CD8-positive, alpha-beta T cell (primary cell): ENCODE measurements at regions of chr17 and their contacts with region 1.

Region 1: GRCh38 chr17:4215882-4216570 is 47.8 kb downstream of the ANKFY1 start:
- DNase-seq: no peak
- ATAC-seq: no peak
- H3K4me3 ChIP-seq: no peak overlapping the region
- H3K4me3 Mint-ChIP-seq: no peak overlapping the region
- H3K27ac ChIP-seq: no peak overlapping the region
- H3K27ac Mint-ChIP-seq: no peak overlapping the region
- H3K4me1 ChIP-seq: no peaks in the 10 kb centered on the region
- H3K4me1 Mint-ChIP-seq: peaks cover 7% of the 10 kb centered on the region
- H3K27me3 ChIP-seq: no peaks in the 10 kb centered on the region
- H3K27me3 Mint-ChIP-seq: no peaks in the 10 kb centered on the region
- CTCF ChIP-seq: no peak

Region 2: GRCh38 chr17:3965118-3965803 is 250.8 kb before region 1 on chr17:
- CTCF ChIA-PET with region 1: no interaction called
- POLR2A ChIA-PET with region 1: no interaction called
- intact Hi-C with region 1: no loop called
- DNase-seq: peak; percentile 33 to 81 (median 73)
- ATAC-seq: peak; percentile 51
- H3K4me3 ChIP-seq: peak overlapping the region; percentile 71 to 83
- H3K4me3 Mint-ChIP-seq: peak overlapping the region; percentile 91
- H3K27ac ChIP-seq: peak overlapping the region; percentile 76 to 77
- H3K27ac Mint-ChIP-seq: peak overlapping the region; percentile 94
- H3K4me1 ChIP-seq: peaks cover 39% of the 10 kb centered on the region
- H3K4me1 Mint-ChIP-seq: peaks cover 40% of the 10 kb centered on the region
- H3K27me3 ChIP-seq: no peaks in the 10 kb centered on the region
- H3K27me3 Mint-ChIP-seq: no peaks in the 10 kb centered on the region
- CTCF ChIP-seq: no peak

Region 3: DNA sequence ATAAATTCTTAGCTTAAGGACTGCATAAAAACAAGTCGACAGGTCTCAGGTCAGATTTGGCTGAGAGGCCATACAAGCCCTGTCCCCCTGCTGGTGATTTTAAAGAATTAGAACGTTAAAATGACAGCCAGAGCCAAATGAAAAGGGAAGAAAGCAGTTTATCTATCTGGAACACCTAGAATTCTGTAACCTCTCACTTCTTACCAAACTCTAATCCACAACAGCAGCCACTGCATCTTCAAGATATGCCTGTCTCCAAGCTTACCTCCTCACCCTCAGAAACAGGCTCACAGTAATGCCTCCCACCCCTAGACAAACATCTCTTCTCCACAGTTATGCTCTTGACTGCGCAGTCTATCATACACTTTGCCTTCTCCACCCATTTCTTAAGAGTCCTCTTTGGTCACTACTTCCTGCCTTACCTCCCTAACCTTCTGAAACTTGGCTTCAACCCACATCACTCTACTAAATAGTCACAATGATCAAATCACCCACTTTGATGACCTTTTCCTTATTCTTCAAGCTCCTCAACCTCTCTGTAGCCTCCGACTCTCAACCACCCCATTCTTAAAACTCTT is 33.5 kb after region 1 on chr17:
- CTCF ChIA-PET with region 1: interaction called, 22 read pairs
- POLR2A ChIA-PET with region 1: no interaction called
- intact Hi-C with region 1: no loop called
- DNase-seq: peak in 2 of 9 experiments; percentile 43 to 53
- ATAC-seq: peak; percentile 42
- H3K4me3 ChIP-seq: no peak overlapping the region
- H3K4me3 Mint-ChIP-seq: no peak overlapping the region
- H3K27ac ChIP-seq: no peak overlapping the region
- H3K27ac Mint-ChIP-seq: peak overlapping the region; percentile 7
- H3K4me1 ChIP-seq: peaks cover 6% of the 10 kb centered on the region
- H3K4me1 Mint-ChIP-seq: peaks cover 56% of the 10 kb centered on the region
- H3K27me3 ChIP-seq: no peaks in the 10 kb centered on the region
- H3K27me3 Mint-ChIP-seq: no peaks in the 10 kb centered on the region
- CTCF ChIP-seq: peak; percentile 58

Region 4: DNA sequence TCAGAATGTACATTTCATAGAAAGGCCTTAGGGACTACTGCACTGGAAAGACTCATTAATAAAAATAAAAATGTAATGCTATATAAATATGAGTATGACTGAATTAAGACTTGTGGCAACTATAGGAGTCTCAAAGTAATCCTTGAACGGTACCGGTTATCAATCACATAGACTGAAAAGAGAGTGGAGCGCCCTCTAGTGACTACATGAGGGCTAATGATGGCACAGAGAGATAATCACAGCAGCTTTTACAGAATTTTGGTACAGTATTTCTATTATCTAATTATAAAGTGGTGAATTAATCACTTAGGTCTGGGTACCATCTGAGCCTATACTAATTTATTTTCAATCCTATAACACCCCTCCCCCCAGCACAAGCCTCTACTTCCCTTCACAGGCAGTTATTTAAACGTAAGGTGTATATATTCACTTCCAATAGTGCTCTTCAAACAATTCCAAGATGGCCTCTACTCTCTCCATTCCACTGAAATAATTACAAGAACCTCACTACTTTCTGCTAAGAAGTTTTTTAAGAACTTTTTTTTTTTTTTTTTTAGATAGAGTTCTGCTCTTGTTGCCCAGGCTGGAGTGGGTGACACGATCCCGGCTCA is 88.5 kb after region 1 on chr17:
- CTCF ChIA-PET with region 1: interaction called, 28 read pairs
- POLR2A ChIA-PET with region 1: no interaction called
- intact Hi-C with region 1: loop called (anchors 1 kb)
- DNase-seq: peak in 8 of 9 experiments; percentile 23 to 76 (median 56)
- ATAC-seq: peak; percentile 79
- H3K4me3 ChIP-seq: no peak overlapping the region
- H3K4me3 Mint-ChIP-seq: no peak overlapping the region
- H3K27ac ChIP-seq: no peak overlapping the region
- H3K27ac Mint-ChIP-seq: no peak overlapping the region
- H3K4me1 ChIP-seq: peaks cover 6% of the 10 kb centered on the region
- H3K4me1 Mint-ChIP-seq: peaks cover 22% of the 10 kb centered on the region
- H3K27me3 ChIP-seq: no peaks in the 10 kb centered on the region
- H3K27me3 Mint-ChIP-seq: no peaks in the 10 kb centered on the region
- CTCF ChIP-seq: peak; percentile 80

Region 5: GRCh38 chr17:4407851-4408250 is 191.8 kb after region 1 on chr17:
- CTCF ChIA-PET with region 1: interaction called, 65 read pairs
- POLR2A ChIA-PET with region 1: no interaction called
- intact Hi-C with region 1: loop called in 1 of 2 experiments (anchors 1 kb)
- DNase-seq: no peak
- ATAC-seq: no peak
- H3K4me3 ChIP-seq: no peak overlapping the region
- H3K4me3 Mint-ChIP-seq: no peak overlapping the region
- H3K27ac ChIP-seq: no peak overlapping the region
- H3K27ac Mint-ChIP-seq: no peak overlapping the region
- H3K4me1 ChIP-seq: peaks cover 1% of the 10 kb centered on the region
- H3K4me1 Mint-ChIP-seq: peaks cover 2% of the 10 kb centered on the region
- H3K27me3 ChIP-seq: no peaks in the 10 kb centered on the region
- H3K27me3 Mint-ChIP-seq: no peaks in the 10 kb centered on the region
- CTCF ChIP-seq: no peak

Region 6: GRCh38 chr17:4420692-4421131 is 204.7 kb after region 1 on chr17:
- CTCF ChIA-PET with region 1: interaction called, 78 read pairs
- POLR2A ChIA-PET with region 1: interaction called, 3 read pairs
- intact Hi-C with region 1: no loop called
- DNase-seq: peak in 8 of 9 experiments; percentile 40 to 86 (median 59)
- ATAC-seq: peak; percentile 99
- H3K4me3 ChIP-seq: no peak overlapping the region
- H3K4me3 Mint-ChIP-seq: no peak overlapping the region
- H3K27ac ChIP-seq: no peak overlapping the region
- H3K27ac Mint-ChIP-seq: no peak overlapping the region
- H3K4me1 ChIP-seq: peaks cover 4% of the 10 kb centered on the region
- H3K4me1 Mint-ChIP-seq: peaks cover 3% of the 10 kb centered on the region
- H3K27me3 ChIP-seq: no peaks in the 10 kb centered on the region
- H3K27me3 Mint-ChIP-seq: no peaks in the 10 kb centered on the region
- CTCF ChIP-seq: peak; percentile 85